B cell (primary cell): ENCODE measurements at regions of chr17 and their contacts with region 1.

Region 1: DNA sequence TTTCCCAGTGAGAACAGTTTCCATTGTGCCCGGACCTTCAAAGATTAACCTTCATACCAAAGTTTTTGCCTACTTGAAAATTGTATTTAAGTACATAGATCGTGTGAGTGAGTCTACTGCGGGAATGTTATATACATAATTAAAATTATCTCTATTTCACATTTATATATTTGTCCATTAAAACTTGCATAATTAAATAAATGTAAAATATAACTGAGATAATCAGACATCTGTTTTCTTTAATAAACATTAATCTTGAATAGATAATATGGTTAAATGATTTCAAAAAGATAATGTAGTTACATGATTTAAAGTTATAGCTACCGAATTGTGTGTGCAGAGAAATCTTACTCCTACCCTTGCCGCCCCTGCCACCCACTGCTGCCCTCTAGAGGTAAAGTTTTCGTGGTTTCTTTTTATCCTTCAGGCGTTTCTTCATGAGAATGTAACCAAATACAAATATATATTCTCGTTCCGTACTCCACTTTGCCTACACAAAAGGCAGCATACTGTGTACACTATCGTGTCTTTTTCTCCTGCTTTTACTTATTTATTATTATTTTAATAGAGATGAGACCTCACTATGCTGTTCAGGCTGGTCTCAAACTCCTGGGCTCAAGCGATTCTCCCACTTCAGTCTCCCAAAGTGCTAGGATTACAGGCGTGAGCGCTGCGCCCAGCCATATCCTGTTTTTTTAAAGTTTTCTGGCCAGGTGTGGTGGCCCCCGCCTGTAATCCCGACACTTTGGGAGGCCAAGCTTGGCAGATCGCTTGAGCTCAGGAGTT is 35.6 kb downstream of the RPA1 start:
- DNase-seq: peak; percentile 73
- ATAC-seq: peak; percentile 57
- H3K4me3 ChIP-seq: no peak overlapping the region
- H3K4me3 Mint-ChIP-seq: no peak overlapping the region
- H3K27ac ChIP-seq: no peak overlapping the region
- H3K27ac Mint-ChIP-seq: no peak overlapping the region
- H3K4me1 ChIP-seq: no peaks in the 10 kb centered on the region
- H3K4me1 Mint-ChIP-seq: no peaks in the 10 kb centered on the region
- H3K27me3 ChIP-seq: no peaks in the 10 kb centered on the region
- H3K27me3 Mint-ChIP-seq: no peaks in the 10 kb centered on the region
- CTCF ChIP-seq: peak; percentile 93

Region 2: DNA sequence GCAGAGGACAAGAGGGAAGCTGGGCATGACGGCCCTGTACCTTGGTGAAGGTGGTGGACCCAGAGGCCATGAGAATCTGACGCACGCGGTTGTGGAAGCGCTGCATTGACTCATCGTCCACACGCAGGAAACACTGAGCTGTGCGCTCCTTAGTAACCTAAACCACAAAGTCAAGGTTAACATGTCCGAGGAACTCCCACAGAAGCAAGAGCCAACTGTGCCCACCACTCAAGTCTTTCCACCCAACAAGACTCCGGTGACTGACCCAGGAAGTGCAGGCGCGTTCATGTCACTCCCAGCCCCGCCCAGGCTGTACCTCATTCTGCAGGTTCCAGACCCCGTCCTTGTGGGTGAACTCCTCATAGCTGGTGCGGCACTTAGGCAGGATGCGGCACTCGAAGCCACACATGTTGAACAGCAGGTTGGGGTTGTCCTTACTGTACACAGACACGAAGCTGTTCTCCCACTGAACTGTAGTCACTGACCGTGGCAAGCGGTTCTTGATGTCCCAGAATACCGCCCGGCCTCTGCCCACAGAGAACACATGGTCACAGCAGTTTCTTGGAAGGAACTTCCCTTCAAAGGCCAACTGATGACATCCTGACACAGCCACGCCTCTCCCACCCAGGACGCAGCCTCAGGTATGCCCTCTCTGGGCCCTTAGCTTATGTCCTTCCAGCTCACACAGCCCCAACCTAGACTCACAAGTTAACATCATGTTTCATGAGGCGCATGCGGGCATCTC is 192.2 kb before region 1 on chr17:
- CTCF ChIA-PET with region 1: interaction called, 26 read pairs
- POLR2A ChIA-PET with region 1: interaction called, 5 read pairs
- intact Hi-C with region 1: no loop called
- DNase-seq: no peak
- ATAC-seq: no peak
- H3K4me3 ChIP-seq: no peak overlapping the region
- H3K4me3 Mint-ChIP-seq: no peak overlapping the region
- H3K27ac ChIP-seq: no peak overlapping the region
- H3K27ac Mint-ChIP-seq: no peak overlapping the region
- H3K4me1 ChIP-seq: no peaks in the 10 kb centered on the region
- H3K4me1 Mint-ChIP-seq: peaks cover 7% of the 10 kb centered on the region
- H3K27me3 ChIP-seq: no peaks in the 10 kb centered on the region
- H3K27me3 Mint-ChIP-seq: no peaks in the 10 kb centered on the region
- CTCF ChIP-seq: no peak

Region 3: DNA sequence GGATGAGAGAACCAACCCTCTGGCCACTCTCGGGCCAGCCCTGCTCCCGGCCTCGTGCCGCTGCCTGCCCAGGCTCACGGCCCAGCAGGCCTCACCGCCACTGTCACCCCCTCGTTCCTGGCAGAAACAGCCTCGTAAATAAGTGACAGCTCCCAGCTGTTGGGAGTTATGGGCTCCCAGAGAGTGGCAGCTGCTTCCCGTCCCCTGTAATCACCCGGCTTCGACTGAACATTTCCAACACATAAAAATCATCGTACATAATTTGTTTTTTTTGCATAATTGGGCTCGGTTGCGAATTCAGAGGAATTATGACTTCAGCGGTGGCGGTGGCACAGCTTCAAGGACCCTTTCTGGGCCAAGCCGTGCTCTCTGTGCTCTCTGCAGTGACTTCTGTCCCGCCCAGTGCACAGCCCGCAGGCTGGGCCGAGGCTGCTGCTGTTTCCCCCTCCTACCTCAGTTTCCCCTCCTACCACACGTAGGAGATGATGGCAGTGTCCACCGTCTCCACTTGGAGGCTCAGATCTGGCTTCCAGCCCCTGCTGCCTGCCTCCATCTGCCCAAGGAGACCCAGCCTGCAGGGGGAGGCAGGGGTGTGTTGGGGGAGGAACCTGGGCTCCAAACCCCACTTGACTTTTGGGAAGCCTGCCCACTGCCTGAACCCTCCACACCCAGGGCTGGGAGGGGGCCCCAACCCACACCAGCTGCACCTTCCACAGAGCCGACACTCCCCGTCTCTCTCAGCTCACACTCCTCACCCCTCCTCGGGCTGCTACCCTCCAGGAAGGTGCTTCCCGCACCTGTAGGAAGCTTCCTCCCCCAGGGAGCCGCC is 74.8 kb after region 1 on chr17:
- CTCF ChIA-PET with region 1: no interaction called
- POLR2A ChIA-PET with region 1: no interaction called
- intact Hi-C with region 1: no loop called
- DNase-seq: no peak
- ATAC-seq: no peak
- H3K4me3 ChIP-seq: no peak overlapping the region
- H3K4me3 Mint-ChIP-seq: no peak overlapping the region
- H3K27ac ChIP-seq: no peak overlapping the region
- H3K27ac Mint-ChIP-seq: no peak overlapping the region
- H3K4me1 ChIP-seq: no peaks in the 10 kb centered on the region
- H3K4me1 Mint-ChIP-seq: no peaks in the 10 kb centered on the region
- H3K27me3 ChIP-seq: no peaks in the 10 kb centered on the region
- H3K27me3 Mint-ChIP-seq: no peaks in the 10 kb centered on the region
- CTCF ChIP-seq: no peak

Region 4: GRCh38 chr17:2238432-2239169 is 373.2 kb after region 1 on chr17:
- CTCF ChIA-PET with region 1: no interaction called
- POLR2A ChIA-PET with region 1: no interaction called
- intact Hi-C with region 1: no loop called
- DNase-seq: peak; percentile 48
- ATAC-seq: peak; percentile 52
- H3K4me3 ChIP-seq: peak overlapping the region in 1 of 5 experiments; percentile 13
- H3K4me3 Mint-ChIP-seq: peak overlapping the region; percentile 65
- H3K27ac ChIP-seq: peak overlapping the region; percentile 37 to 49
- H3K27ac Mint-ChIP-seq: peak overlapping the region; percentile 80
- H3K4me1 ChIP-seq: peaks cover 12 to 25% of the 10 kb centered on the region in 2 donors
- H3K4me1 Mint-ChIP-seq: peaks cover 22% of the 10 kb centered on the region
- H3K27me3 ChIP-seq: no peaks in the 10 kb centered on the region
- H3K27me3 Mint-ChIP-seq: no peaks in the 10 kb centered on the region
- CTCF ChIP-seq: no peak